ENCODE measurements at regions of chr5 and their contacts with region 1.

Region 1: DNA sequence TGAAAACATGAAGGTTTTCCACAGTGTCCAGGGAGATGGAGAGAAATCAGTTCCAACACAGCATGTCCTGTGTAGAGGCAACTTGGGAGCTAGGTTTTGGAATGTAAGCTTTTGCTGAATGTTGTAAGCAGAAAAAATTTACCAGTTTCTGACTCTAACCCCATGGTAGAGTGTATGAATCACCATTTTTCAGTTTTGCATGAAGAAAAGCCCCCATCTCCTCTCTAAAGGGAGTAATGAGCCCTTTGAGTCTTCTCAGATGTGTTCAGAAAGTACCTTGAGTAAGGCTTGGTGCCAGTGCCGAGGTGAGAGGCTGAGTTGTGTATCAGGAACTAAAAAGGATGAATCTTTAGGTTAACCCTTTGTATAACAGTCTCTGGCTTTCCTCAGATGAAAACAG is 96.2 kb downstream of the ADRB2 start:
- DNase-seq: no peak

Region 2: DNA sequence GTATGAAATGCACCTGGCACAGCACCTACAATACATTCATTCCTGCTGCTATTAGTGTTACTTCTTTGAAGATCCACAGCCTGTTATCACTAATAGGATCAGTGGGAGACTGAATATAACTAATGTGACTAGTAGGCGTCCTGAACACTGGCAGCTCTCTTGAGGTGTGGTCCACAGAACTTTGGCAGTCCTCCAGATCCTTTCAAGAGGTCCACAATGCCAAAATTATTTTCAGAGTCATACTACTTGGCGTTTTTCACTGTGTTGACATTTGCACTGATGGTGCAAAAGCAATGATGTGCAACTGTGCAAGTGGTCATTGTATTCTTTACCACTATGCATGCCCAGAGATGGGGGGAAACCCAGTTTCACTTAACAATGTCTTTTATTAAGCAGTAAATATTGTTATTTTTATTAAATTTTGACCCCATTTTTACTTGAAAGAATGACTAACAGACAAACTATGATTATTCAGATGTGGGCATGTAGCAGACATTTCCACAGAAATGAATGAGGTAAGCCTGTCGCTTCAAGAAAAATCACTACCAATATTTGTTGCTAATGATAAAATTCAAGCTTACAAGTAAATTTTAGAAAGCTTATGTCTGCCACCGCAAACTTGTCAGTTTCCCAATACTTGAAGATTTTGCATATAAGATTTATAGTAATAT is 47.3 kb before region 1 on chr5:
- intact Hi-C with region 1: loop called in 1 of 2 experiments (anchors 10 kb)
- DNase-seq: no peak